Left cardiac atrium (tissue), 4 donors: ENCODE measurements at regions of chr5 and their contacts with region 1.

Region 1: DNA sequence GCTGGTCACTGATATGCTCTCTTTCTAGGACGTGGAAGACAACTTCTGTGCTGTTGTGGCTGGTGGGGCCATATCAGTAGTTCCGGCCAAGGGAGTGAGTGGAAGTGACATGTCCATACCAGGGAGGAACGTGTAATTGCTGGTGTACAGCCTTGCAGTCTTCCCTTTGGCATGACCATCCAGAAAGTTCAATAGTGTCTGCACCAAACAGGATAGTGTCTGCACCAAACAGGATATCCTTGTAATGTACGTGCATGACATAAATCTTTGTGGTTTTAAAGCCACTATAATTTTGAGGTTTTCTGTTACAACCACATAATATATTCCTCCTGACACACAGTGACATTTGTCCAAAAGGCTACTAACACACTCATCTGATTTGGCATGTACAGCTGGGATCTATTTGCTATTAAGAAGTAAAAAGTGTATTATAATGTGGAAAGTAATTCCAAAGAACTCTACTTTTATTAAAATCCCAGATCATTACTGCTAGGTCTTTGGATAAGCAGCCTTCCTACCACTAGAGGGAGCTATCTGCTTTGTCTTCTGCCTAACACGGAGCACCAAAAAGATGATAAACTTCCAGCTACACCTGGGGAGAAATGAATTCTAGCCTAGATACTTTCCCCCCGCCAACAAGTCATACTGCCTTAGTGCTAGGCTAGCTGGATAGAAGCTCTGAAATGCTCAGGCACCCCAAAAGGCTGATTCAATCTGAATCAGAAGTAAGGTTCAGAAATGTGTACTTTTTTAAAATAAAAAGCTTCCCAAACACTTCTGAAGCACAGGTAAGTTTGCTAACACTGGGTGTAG is 52.7 kb downstream of the RNF145 start:
- DNase-seq: no peak
- ATAC-seq: peak; percentile 83 to 85

Region 2: DNA sequence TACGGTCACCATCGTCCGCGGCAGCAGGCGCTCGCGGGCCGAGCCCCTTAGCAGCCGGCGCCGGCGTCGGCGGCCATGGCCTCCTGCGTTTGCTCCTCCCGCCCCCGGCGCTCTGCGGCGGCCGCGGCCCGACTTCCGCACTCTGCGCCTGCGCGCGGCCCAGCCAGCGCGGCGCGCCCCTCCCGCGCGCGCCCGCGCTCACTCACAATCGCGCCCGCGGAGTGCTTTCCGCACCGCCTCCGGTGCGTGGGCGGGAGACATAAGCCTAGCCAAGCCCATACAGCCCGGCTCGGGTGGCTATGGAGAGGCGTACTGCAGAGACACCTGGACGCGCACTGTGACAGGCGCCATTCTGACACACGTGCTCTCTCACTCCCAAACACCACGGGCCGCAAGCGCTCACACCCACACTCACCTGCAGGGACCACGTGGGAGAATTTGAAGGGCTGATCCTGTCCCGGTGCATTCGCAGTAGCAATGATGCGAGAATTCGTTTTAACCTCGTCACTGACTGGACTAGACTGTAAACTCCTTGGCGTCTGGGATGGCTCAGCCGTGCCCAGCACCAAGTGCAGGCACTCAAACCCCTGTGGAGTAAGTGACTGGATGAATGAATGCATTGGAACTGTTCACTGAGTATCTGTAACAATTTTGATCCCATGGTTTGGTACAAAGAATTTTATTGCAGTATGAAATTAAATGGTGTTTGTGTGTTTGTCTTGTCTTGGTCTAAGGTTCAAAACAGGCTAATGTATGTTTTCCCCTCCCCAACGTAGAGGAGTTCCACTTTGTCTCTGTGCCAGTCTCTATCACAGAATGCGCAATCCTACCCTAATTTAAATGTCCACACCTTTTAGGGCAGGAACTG is 53.0 kb after region 1 on chr5 and contains the start of gene RNF145:
- intact Hi-C with region 1: loop called in 1 of 2 experiments (anchors 10 kb)
- DNase-seq: peak; percentile 95
- ATAC-seq: peak; percentile 78 to 91
- total RNA-seq, gene RNF145: 28.3 to 30.4 TPM

Region 3: GRCh38 chr5:159262859-159263567 is 106.4 kb after region 1 on chr5 and contains the start of gene UBLCP1:
- intact Hi-C with region 1: loop called in 1 of 2 experiments (anchors 2 kb)
- DNase-seq: peak; percentile 85
- ATAC-seq: peak; percentile 94 to 96
- total RNA-seq, gene UBLCP1: 13.6 to 15.5 TPM

Region 4: DNA sequence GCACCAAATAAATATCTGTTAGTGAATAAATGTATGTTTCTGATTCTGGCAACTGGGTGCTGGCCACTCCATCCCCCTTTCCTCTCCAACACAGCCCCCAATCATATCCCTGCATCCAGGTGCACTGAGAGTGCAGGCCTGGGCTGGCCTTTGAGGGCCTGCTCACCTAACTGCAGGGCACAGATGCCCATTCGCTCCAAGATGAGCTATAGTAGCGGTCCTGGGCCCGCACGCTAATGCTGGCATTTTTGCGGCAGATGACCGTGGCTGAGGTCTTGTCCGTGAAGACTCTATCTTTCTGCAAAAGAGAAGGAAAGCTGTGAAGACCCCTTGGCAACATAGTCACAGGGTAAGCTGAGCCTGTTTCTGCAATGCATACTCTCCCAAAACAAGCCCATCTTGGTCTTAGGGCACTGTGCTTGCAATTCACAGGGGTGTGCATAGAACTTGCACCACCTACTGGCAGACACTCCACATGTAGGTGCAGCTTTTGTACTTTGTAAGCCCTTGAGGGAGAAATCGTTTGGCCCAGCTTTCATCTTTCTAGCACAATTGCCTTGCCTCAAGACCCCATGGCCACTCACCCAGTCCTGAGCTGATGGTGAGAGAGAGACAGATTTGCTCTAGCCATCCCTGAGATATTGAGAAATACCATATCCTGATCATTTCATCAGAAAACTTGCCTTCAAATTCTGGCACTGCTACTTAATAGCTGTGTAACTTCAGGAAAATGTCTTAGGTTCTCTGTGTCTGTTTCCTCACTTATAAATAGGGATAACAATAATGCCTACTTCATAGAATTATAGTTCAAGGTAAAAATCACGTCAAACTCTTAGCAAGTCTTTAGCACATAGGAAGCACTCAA is 160.1 kb after region 1 on chr5:
- intact Hi-C with region 1: loop called in 1 of 2 experiments (anchors 10 kb)
- DNase-seq: no peak
- ATAC-seq: peak in 1 of 2 donors; percentile 47